GM12878 (cell line): ENCODE measurements at regions of chr3 and their contacts with region 1.

Region 1: DNA sequence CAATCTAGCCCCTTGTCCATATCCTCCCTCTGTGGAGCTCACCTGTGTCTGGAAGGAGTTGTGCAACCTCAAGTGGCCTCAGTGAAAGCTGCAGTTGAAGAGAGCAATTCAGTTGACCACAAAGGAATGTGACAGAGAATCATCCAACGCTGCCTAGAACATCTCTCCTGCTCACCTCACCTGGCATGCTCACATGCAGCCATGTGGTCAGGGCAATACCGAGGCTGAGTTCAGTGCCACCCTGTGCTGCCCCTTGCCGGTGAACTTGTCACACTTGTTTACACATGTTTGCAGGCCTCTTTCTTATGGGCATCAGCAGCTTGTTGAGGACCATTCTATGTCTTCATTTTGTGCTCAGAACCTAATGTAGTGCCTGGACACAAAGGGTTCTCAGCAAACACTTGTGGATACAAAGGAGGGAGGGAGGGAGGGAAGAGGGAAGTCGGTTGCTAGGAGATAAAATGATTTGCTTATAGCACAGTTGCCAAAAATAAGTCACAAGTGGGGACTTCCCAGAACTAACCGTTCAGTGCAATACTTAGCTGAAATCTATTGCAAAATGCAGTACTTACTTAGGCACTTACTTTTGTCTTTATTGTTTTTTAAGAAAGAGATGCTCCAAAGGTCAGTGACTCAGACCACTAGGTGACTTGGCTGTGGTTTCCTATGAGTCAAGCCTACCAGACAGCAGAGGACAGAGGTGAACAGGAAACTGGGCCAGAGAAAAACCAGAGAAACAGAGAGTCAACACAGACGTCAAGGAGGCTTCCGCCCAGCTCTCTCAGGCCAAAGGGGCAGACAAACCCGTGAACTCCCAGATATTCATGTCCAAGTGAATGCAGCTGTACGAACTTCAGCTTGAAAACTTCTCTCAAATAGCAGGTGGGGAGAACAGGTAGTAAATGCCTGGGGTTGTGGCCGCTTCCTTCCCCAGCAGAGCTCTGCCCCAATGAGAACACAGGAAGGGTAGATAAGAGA is 227.8 kb upstream of the CTNNB1 start:
- DNase-seq: peak; percentile 93
- ATAC-seq: peak; percentile 94
- H3K4me3 ChIP-seq: no peak overlapping the region
- H3K27ac ChIP-seq: peak overlapping the region; percentile 78
- H3K4me1 ChIP-seq: peaks cover 31% of the 10 kb centered on the region
- H3K27me3 ChIP-seq: no peaks in the 10 kb centered on the region
- CTCF ChIP-seq: peak; percentile 18 to 37 (median 36); a peak in 4 of 6 replicates
- EP300 ChIP-seq: peak; percentile 89 to 90; a peak in 2 of 4 replicates
- POLR2A ChIP-seq: 0 out of 2 replicates have a peak, but pooled peaks have one; percentile 18
- RAD21 ChIP-seq: peak; percentile 72

Region 2: DNA sequence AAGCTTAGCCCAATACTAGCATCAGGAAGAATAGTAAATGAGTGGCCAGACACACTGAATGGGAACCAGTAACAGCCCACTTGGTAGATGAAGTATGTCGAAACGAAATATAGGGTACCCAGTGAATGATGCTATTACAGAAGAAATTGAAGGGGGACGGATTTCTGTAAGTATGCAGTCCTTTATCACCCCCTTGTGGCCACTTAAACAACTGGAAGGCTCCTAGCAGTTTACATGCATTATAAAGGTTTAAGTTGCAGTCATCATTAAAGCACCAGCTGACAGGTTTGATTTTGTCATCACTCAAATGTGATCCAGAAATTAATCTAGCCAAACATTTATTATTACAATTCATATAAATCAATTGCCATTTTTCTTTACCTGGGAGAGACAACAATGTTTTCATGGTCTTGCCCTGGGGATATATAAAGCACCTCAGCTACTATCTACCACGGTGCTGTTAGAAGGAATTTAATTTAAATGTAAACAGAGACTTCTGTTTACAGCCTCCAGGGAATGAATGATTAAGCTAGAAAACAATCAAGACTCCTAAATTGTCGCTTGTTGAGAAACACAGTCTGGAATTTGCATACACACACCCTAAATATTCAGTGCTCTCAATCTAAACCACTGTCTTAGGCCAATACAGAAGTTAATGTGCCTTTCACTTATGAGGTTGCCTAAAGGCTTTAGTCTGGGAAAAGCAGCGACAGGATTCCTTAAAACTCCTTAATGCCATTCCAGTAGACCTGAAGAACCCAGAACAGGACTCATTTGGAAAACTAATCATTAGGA is 654.2 kb before region 1 on chr3:
- CTCF ChIA-PET with region 1: no interaction called
- POLR2A ChIA-PET with region 1: no interaction called
- RAD21 ChIA-PET with region 1: no interaction called
- SMC1A ChIA-PET with region 1: no interaction called
- in situ Hi-C with region 1: no loop called
- intact Hi-C with region 1: loop called (anchors 10 kb)
- DNase-seq: no peak
- ATAC-seq: peak; percentile 90
- H3K4me3 ChIP-seq: no peak overlapping the region
- H3K27ac ChIP-seq: no peak overlapping the region
- H3K4me1 ChIP-seq: no peaks in the 10 kb centered on the region
- H3K27me3 ChIP-seq: no peaks in the 10 kb centered on the region
- CTCF ChIP-seq: peak; percentile 73 to 79 (median 77)
- EP300 ChIP-seq: no peak
- POLR2A ChIP-seq: no peak
- RAD21 ChIP-seq: peak; percentile 83

Region 3: GRCh38 chr3:40608091-40608490 is 363.4 kb before region 1 on chr3:
- CTCF ChIA-PET with region 1: no interaction called
- POLR2A ChIA-PET with region 1: no interaction called
- RAD21 ChIA-PET with region 1: no interaction called
- SMC1A ChIA-PET with region 1: no interaction called
- in situ Hi-C with region 1: no loop called
- intact Hi-C with region 1: no loop called
- DNase-seq: no peak
- ATAC-seq: no peak
- H3K4me3 ChIP-seq: no peak overlapping the region
- H3K27ac ChIP-seq: no peak overlapping the region
- H3K4me1 ChIP-seq: no peaks in the 10 kb centered on the region
- H3K27me3 ChIP-seq: no peaks in the 10 kb centered on the region; a peak in 1 of 4 replicates
- CTCF ChIP-seq: no peak
- EP300 ChIP-seq: no peak
- POLR2A ChIP-seq: no peak
- RAD21 ChIP-seq: no peak

Region 4: GRCh38 chr3:40782111-40782721 is 189.3 kb before region 1 on chr3:
- CTCF ChIA-PET with region 1: no interaction called
- POLR2A ChIA-PET with region 1: no interaction called
- RAD21 ChIA-PET with region 1: no interaction called
- SMC1A ChIA-PET with region 1: no interaction called
- in situ Hi-C with region 1: no loop called
- intact Hi-C with region 1: loop called (anchors 1 kb)
- DNase-seq: no peak
- ATAC-seq: peak; percentile 76
- H3K4me3 ChIP-seq: no peak overlapping the region
- H3K27ac ChIP-seq: no peak overlapping the region
- H3K4me1 ChIP-seq: no peaks in the 10 kb centered on the region
- H3K27me3 ChIP-seq: no peaks in the 10 kb centered on the region
- CTCF ChIP-seq: peak in 2 of 3 experiments; percentile 20 to 36; a peak in 3 of 6 replicates
- EP300 ChIP-seq: no peak
- POLR2A ChIP-seq: no peak
- RAD21 ChIP-seq: peak; percentile 32; the same call in 1 of the 2 replicates

Region 5: DNA sequence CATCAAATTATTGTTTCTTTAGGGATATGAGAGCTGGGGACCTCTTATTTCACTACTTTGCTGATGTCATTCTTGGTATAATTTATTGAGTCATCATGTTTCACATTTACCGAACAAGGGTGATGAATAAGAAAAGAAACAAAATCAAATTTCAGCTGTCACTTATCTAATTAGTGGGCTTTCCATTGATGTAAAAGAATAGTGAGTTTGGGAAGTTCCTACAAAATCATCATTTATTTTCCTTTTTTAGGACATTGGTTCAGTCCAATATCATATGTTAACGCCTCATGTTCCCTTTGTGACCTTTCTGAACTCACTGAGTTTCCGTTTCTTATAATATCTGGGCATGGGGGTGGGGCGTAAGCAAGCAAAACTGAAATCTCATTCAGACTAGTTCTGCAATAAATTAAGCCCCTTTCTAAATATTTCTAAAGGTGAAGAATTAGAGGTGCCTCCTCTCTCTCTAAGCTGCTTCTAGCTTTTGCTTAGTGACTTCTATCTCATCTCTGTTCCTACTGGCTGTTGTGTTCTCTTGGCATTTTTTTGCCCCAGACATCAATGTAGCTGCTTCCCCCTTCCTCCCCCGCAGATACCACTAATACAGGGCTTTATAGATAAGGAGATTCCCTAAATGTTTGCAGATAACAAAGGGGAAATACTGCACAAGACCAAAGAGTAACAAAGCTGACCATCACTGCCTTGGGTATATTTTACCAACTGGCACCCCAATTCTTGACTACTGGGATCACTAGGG is 10.2 kb before region 1 on chr3:
- CTCF ChIA-PET with region 1: interaction called, 10 read pairs
- POLR2A ChIA-PET with region 1: no interaction called
- RAD21 ChIA-PET with region 1: interaction called, 8 read pairs
- SMC1A ChIA-PET with region 1: interaction called, 22 read pairs
- in situ Hi-C with region 1: no loop called
- intact Hi-C with region 1: no loop called
- DNase-seq: no peak
- ATAC-seq: peak; percentile 90
- H3K4me3 ChIP-seq: no peak overlapping the region
- H3K27ac ChIP-seq: peak overlapping the region; percentile 36
- H3K4me1 ChIP-seq: peaks cover 12% of the 10 kb centered on the region
- H3K27me3 ChIP-seq: no peaks in the 10 kb centered on the region
- CTCF ChIP-seq: no peak
- EP300 ChIP-seq: peak in 1 of 2 experiments; percentile 72; a peak in 1 of 4 replicates
- POLR2A ChIP-seq: no peak
- RAD21 ChIP-seq: 0 out of 2 replicates have a peak, but pooled peaks have one; percentile 1

Region 6: DNA sequence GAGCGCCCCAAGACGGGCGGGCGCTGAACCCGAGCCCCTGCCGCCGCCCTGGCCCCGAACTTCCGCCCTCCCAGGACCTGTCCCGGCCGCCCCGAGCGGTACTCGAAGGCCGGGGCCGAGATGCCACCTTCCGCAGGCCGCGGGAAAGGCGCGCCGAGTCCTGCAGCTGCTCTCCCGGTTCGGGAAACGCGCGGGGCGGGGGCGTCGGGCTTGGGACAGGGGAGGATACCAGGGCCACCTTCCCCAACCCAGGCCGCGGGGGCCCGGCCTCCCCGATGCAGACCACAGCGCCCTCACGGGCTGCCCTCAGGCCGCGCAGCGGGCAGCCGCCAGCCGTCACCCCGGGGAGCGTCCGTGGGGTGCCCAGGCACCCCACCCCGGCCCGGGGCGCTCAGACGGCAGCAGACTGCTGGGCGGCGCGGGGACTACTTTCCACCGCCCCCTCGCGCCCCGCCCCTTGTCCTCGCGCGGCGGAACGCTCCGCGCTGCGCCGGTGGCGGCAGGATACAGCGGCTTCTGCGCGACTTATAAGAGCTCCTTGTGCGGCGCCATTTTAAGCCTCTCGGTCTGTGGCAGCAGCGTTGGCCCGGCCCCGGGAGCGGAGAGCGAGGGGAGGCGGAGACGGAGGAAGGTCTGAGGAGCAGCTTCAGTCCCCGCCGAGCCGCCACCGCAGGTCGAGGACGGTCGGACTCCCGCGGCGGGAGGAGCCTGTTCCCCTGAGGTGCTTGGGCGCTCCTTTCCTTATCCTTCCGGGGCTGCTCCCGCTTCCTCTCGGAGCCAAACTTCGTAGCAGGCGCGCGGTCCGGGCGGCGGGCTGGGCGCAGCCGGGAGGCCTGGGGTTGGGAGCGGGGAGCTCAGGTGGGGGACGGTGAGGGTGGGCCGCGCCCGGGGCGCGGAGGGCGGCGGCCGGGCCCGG is 227.7 kb after region 1 on chr3 and contains the start of gene CTNNB1:
- CTCF ChIA-PET with region 1: no interaction called
- POLR2A ChIA-PET with region 1: no interaction called
- RAD21 ChIA-PET with region 1: no interaction called
- SMC1A ChIA-PET with region 1: interaction called, 3 read pairs
- in situ Hi-C with region 1: no loop called
- intact Hi-C with region 1: loop called (anchors 5 kb)
- DNase-seq: peak; percentile 50
- ATAC-seq: peak; percentile 77
- H3K4me3 ChIP-seq: peak within 1 kb of the TSS; percentile 90
- H3K27ac ChIP-seq: peak within 1 kb of the TSS; percentile 93
- H3K4me1 ChIP-seq: no peaks in the 10 kb centered on the region
- H3K27me3 ChIP-seq: no peaks in the 10 kb centered on the region
- CTCF ChIP-seq: peak in 2 of 3 experiments; percentile 3 to 4; a peak in 2 of 6 replicates
- EP300 ChIP-seq: no peak
- POLR2A ChIP-seq: peak; percentile 100
- RAD21 ChIP-seq: no peak
- polyA plus RNA-seq, gene CTNNB1: 30.4 to 36.6 TPM

Region 7: DNA sequence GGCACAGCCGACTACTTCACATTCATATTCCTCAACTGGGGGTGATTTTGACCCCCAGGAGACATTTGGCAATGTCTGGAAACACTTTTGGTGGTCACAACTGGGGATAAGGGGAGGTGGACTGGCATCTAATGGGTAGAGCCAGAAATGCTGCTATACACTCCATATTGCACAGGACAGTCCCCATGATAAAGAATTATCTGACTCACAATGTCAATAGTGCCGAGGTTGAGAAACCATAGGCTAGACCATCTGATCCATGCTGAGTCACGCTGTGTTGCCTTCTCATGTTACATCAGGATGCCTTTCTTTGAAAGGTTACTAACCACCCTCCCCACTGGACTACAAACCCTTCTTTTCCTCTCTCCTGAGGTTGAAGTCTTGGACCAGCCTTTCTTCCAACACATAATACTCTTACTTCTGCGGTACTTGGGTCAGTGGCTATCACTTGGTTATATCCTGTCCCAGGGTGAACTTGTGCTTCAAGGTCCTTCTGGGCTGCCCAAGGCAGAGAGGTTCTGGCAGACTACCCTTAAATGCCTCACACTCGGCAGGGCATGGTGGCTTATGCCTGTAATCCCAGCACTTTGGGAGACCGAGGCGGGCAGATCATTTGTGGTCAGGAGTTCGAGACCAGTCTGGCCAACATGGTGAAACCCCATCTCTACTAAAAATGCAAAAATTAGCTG is 296.6 kb after region 1 on chr3:
- CTCF ChIA-PET with region 1: no interaction called
- POLR2A ChIA-PET with region 1: no interaction called
- RAD21 ChIA-PET with region 1: no interaction called
- SMC1A ChIA-PET with region 1: no interaction called
- in situ Hi-C with region 1: no loop called
- intact Hi-C with region 1: no loop called
- DNase-seq: no peak
- ATAC-seq: no peak
- H3K4me3 ChIP-seq: no peak overlapping the region
- H3K27ac ChIP-seq: no peak overlapping the region
- H3K4me1 ChIP-seq: no peaks in the 10 kb centered on the region
- H3K27me3 ChIP-seq: no peaks in the 10 kb centered on the region; a peak in 1 of 4 replicates
- CTCF ChIP-seq: no peak
- EP300 ChIP-seq: no peak
- POLR2A ChIP-seq: no peak
- RAD21 ChIP-seq: no peak